ENCODE measurements at regions of chr2 and their contacts with region 1.

Region 1: GRCh38 chr2:74919827-74920226 is 38.6 kb upstream of the POLE4 start:
- DNase-seq: peak; percentile 70 to 82
- ATAC-seq: peak; percentile 60 to 75 (median 71)
- H3K4me3 ChIP-seq: no peak overlapping the region
- H3K4me3 Mint-ChIP-seq: no peak overlapping the region
- H3K27ac ChIP-seq: no peak overlapping the region
- H3K27ac Mint-ChIP-seq: no peak overlapping the region
- H3K4me1 ChIP-seq: peaks cover 28% of the 10 kb centered on the region
- H3K4me1 Mint-ChIP-seq: peaks cover 19 to 29% of the 10 kb centered on the region in 2 donors
- H3K27me3 ChIP-seq: no peaks in the 10 kb centered on the region
- H3K27me3 Mint-ChIP-seq: peaks cover 20 to 29% of the 10 kb centered on the region in 2 donors
- CTCF ChIP-seq: peak; percentile 89

Region 2: GRCh38 chr2:75403991-75404428 is 484.2 kb after region 1 on chr2:
- intact Hi-C with region 1: loop called (anchors 1 kb)
- DNase-seq: peak in 1 of 2 donors; percentile 64
- ATAC-seq: peak in 1 of 3 donors; percentile 70
- H3K4me3 ChIP-seq: no peak overlapping the region
- H3K4me3 Mint-ChIP-seq: no peak overlapping the region
- H3K27ac ChIP-seq: no peak overlapping the region
- H3K27ac Mint-ChIP-seq: no peak overlapping the region
- H3K4me1 ChIP-seq: no peaks in the 10 kb centered on the region
- H3K4me1 Mint-ChIP-seq: no peaks in the 10 kb centered on the region
- H3K27me3 ChIP-seq: no peaks in the 10 kb centered on the region
- H3K27me3 Mint-ChIP-seq: peaks cover 15 to 30% of the 10 kb centered on the region in 2 donors
- CTCF ChIP-seq: peak; percentile 82

Region 3: GRCh38 chr2:75608684-75609333 is 689.0 kb after region 1 on chr2:
- intact Hi-C with region 1: loop called (anchors 1 kb)
- DNase-seq: peak; percentile 26 to 70
- ATAC-seq: peak; percentile 54 to 90 (median 73)
- H3K4me3 ChIP-seq: no peak overlapping the region
- H3K4me3 Mint-ChIP-seq: no peak overlapping the region
- H3K27ac ChIP-seq: no peak overlapping the region
- H3K27ac Mint-ChIP-seq: no peak overlapping the region
- H3K4me1 ChIP-seq: peaks cover 4% of the 10 kb centered on the region
- H3K4me1 Mint-ChIP-seq: peaks cover 0 to 5% of the 10 kb centered on the region in 2 donors
- H3K27me3 ChIP-seq: peaks cover 13% of the 10 kb centered on the region
- H3K27me3 Mint-ChIP-seq: peaks cover 47 to 72% of the 10 kb centered on the region in 2 donors
- CTCF ChIP-seq: peak; percentile 69

Region 4: DNA sequence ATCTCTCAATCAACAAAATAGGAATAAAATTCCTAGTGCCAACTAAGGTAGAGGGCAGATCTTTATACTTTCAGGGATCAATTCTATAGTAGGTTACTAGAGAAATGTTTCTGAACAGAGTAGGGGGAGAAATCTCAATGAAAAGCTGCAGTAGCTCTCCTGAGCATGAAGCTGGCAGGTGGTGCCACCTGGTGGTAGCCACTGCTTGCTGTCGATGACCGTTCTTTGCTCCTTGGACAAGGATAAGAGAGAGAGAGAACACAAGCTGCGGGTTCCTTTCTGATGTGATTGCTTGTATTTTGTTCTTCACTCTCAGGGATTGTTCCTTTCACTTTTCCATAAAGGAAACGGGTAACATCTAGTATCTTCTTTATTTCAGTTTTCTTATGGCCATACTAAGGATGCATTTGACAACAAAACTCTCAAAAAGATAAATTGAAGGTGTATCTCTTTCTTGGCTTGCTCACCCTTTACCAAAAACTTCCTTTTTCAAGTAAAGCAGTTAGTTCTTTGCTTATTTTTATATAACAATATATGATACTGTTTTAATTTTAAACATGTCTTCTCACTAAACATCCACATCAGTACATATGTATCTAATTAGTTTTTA is 708.2 kb after region 1 on chr2:
- intact Hi-C with region 1: loop called (anchors 5 kb)
- DNase-seq: peak; percentile 41 to 71
- ATAC-seq: peak; percentile 64 to 83 (median 73)
- H3K4me3 ChIP-seq: no peak overlapping the region
- H3K4me3 Mint-ChIP-seq: no peak overlapping the region
- H3K27ac ChIP-seq: no peak overlapping the region
- H3K27ac Mint-ChIP-seq: no peak overlapping the region
- H3K4me1 ChIP-seq: no peaks in the 10 kb centered on the region
- H3K4me1 Mint-ChIP-seq: no peaks in the 10 kb centered on the region
- H3K27me3 ChIP-seq: peaks cover 2% of the 10 kb centered on the region
- H3K27me3 Mint-ChIP-seq: peaks cover 23 to 36% of the 10 kb centered on the region in 2 donors
- CTCF ChIP-seq: peak; percentile 85

Measured in natural killer cell (primary cell).